Calu3 (cell line): ENCODE measurements at regions of chr3 and their contacts with region 1.

Region 1: DNA sequence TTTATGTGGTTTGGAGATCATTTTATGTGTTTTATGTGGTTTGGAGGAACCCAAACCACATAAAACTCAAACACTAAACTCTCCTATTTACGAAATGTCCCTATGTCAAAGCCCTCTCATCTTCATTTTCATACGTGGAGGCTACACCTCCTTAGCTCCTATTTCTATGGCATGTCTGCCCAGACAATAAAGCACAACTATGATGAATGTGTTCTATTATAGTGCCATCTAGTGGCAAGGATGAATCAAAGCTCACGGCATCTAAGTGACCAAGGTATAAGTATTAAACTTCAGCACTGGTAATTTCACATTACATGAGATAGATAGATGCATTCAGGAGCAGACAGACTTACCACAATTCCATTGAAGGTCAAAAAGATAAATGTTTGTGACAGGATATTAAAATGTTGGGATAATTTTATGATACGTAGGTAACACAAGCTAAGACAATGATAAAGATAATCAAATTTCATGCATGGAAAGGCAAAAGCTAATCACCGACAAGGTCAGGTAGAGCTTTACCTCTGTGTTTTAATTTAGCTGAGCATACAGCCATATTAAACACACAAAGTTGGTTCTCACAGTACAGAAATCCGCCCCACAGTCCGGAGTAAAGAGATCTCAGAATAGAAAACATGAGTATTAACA is 130.6 kb upstream of the FHIT start:
- DNase-seq: no peak
- H3K4me3 Mint-ChIP-seq: no peak overlapping the region
- H3K27ac Mint-ChIP-seq: no peak overlapping the region
- H3K4me1 Mint-ChIP-seq: no peaks in the 10 kb centered on the region
- H3K27me3 Mint-ChIP-seq: no peaks in the 10 kb centered on the region
- CTCF ChIP-seq: peak; percentile 8

Region 2: GRCh38 chr3:59424268-59425010 is 1957.4 kb before region 1 on chr3:
- CTCF ChIA-PET with region 1: no interaction called
- intact Hi-C with region 1: loop called (anchors 10 kb)
- DNase-seq: no peak
- H3K4me3 Mint-ChIP-seq: no peak overlapping the region
- H3K27ac Mint-ChIP-seq: no peak overlapping the region
- H3K4me1 Mint-ChIP-seq: no peaks in the 10 kb centered on the region
- H3K27me3 Mint-ChIP-seq: no peaks in the 10 kb centered on the region
- CTCF ChIP-seq: no peak

Region 3: GRCh38 chr3:59575113-59576001 is 1806.5 kb before region 1 on chr3:
- CTCF ChIA-PET with region 1: interaction called, 4 read pairs
- intact Hi-C with region 1: loop called (anchors 10 kb)
- DNase-seq: peak; percentile 80
- H3K4me3 Mint-ChIP-seq: no peak overlapping the region
- H3K27ac Mint-ChIP-seq: no peak overlapping the region
- H3K4me1 Mint-ChIP-seq: no peaks in the 10 kb centered on the region
- H3K27me3 Mint-ChIP-seq: peaks cover 8% of the 10 kb centered on the region
- CTCF ChIP-seq: peak; percentile 80